Posterior cingulate gyrus (tissue), 11 donors: ENCODE measurements at regions of chr12 and their contacts with region 1.

Region 1: DNA sequence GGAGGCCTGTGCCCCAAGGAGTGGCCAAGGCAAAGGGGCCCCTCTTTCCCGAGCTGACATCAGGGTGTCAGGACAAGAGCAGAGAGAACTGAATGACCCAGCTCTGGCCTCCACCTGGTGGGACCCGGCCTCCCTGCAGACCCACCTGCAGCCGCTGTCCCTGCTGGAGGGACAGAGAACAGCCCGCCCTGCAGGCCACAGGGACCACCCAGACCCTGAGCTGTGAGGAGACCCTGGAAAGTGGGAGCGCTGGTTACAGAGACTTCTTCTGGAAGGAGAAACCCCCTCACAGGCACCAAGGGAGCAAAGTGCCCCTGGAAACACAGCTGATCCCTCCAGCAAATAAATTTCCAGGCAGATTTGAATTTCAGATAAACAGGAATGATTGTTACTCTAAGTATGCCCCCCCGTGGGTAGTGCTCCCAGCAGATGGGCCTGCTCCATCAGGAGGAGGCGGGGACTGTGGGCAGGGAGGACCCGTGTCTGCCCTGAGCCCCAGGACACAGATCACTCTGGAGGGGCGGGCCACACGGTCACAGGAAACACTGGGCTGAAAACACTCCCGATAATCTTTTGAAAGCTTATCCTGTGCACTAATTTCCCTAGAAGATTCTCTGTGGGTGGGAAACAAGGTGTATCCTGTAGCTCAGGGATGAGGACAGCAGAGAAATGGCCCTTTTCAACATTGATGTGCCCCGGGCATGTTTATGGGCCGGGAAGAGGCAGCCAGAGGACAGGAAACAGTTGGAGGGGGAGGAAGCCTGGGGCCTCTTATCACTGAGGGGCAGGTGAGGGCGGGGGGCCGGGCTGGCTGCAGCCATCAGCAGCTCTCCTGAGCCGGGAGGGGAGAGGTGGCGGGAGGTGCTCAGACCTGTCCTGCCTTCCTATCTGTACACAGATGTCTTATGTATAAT is 276.0 kb downstream of the ADGRD1 start:
- DNase-seq: peak in 3 of 10 donors; percentile 50 to 85 (median 62)

Region 2: DNA sequence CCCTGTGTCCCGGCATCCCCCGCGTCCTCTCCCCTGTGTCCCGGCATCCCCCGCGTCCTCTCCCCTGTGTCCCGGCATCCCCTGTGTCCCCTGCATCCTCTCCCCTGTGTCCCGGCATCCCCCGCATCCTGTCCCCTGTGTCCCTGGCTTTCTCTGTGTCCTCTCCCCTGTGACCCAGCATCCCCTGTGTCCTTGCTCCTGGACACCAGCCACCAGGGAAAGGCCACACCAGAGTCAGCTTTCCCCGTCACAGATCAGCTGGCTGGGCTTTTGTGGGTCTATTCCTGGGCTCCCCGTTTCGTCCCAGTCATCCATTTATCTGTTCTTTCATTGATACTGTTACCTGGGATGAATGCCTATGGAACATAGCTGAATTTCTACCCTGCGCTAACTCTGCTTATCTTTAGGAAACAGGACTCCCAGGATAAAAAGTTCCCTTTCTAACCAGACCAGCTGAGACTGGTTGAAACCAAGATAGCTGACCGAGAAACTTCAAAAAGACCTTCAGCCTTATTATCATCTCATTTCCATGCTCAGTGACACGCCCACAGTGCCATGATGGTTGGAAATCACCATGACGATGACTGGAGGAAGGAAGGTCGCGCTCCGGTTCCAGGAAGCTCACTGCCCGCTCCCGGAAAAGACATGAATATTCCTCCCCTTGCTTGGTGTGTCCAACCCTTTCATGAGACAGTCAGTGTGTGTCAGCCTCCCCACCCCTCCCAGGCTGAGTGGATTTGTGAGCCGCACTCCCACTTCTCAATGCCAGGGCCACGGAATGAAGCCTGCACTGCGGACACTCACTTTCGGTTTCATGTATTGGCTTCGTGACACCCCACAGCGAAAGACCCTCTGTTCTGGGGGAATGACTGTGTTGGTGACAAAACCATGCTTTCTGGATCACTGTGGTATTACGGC is 204.8 kb after region 1 on chr12:
- intact Hi-C with region 1: loop called (anchors 5 kb)
- DNase-seq: peak in 1 of 10 donors; percentile 67